ENCODE measurements at regions of chr17 and their contacts with region 1.

Region 1: GRCh38 chr17:36212966-36213365 is 2.1 kb downstream of the CCL4L2 start:
- H3K4me3 Mint-ChIP-seq: no peak overlapping the region
- H3K27ac Mint-ChIP-seq: no peak overlapping the region
- H3K4me1 Mint-ChIP-seq: peaks cover 66% of the 10 kb centered on the region
- H3K27me3 Mint-ChIP-seq: no peaks in the 10 kb centered on the region

Region 2: GRCh38 chr17:36486204-36487194 is 273.5 kb after region 1 on chr17 and contains the start of gene ZNHIT3:
- intact Hi-C with region 1: loop called (anchors 5 kb)
- H3K4me3 Mint-ChIP-seq: peak within 1 kb of the TSS; percentile 96
- H3K27ac Mint-ChIP-seq: peak within 1 kb of the TSS; percentile 94
- H3K4me1 Mint-ChIP-seq: peaks cover 46% of the 10 kb centered on the region
- H3K27me3 Mint-ChIP-seq: peaks cover 22% of the 10 kb centered on the region

Measured in dendritic cell treated with granulocyte-macrophage colony-stimulating factor and Interleukin-4, amounts not matched to agents 40 ng/mL and 50 ng/mL, for 4 days (primary cell).